Mammary epithelial cell (primary cell): ENCODE measurements at regions of chr17 and their contacts with region 1.

Region 1: GRCh38 chr17:32486111-32486700 is 587 bp upstream of the CDK5R1 start:
- DNase-seq: peak; percentile 73
- H3K4me3 ChIP-seq: peak overlapping the region in 2 of 3 experiments; percentile 60 to 72
- H3K27ac ChIP-seq: no peak overlapping the region
- H3K4me1 ChIP-seq: peaks cover 21% of the 10 kb centered on the region
- H3K27me3 ChIP-seq: no peaks in the 10 kb centered on the region
- CTCF ChIP-seq: no peak

Region 2: GRCh38 chr17:32569171-32570080 is 83.2 kb after region 1 on chr17:
- CTCF ChIA-PET with region 1: no interaction called
- dilution Hi-C with region 1: no loop called
- in situ Hi-C with region 1: no loop called
- intact Hi-C with region 1: loop called (anchors 1 kb)
- DNase-seq: peak; percentile 99
- H3K4me3 ChIP-seq: no peak overlapping the region
- H3K27ac ChIP-seq: peak overlapping the region; percentile 90
- H3K4me1 ChIP-seq: peaks cover 40% of the 10 kb centered on the region
- H3K27me3 ChIP-seq: no peaks in the 10 kb centered on the region
- CTCF ChIP-seq: no peak

Region 3: DNA sequence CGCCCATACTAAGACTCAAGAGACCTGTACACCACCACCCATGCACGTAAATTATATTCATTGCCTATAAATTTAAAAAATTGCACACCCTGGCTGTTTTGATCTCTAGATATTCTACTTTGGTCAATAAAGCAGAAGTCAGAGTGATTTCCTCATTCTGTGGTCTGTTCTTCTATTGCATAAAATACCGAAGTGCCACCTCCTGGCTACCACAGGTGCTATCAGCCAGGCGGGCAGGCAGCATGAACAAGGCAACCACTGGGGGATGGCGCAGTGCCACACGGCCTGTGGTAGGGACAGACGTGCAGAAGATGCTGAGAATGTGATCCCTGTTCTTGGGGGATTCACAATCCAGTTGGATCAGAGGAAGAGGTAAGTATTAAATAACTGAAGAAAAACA is 122.9 kb after region 1 on chr17:
- CTCF ChIA-PET with region 1: no interaction called
- dilution Hi-C with region 1: no loop called
- in situ Hi-C with region 1: loop called in 1 of 2 experiments (anchors 10 kb)
- intact Hi-C with region 1: loop called (anchors 1 kb)
- DNase-seq: peak; percentile 69
- H3K4me3 ChIP-seq: no peak overlapping the region
- H3K27ac ChIP-seq: no peak overlapping the region
- H3K4me1 ChIP-seq: peaks cover 3% of the 10 kb centered on the region
- H3K27me3 ChIP-seq: no peaks in the 10 kb centered on the region
- CTCF ChIP-seq: peak; percentile 62 to 73

Region 4: DNA sequence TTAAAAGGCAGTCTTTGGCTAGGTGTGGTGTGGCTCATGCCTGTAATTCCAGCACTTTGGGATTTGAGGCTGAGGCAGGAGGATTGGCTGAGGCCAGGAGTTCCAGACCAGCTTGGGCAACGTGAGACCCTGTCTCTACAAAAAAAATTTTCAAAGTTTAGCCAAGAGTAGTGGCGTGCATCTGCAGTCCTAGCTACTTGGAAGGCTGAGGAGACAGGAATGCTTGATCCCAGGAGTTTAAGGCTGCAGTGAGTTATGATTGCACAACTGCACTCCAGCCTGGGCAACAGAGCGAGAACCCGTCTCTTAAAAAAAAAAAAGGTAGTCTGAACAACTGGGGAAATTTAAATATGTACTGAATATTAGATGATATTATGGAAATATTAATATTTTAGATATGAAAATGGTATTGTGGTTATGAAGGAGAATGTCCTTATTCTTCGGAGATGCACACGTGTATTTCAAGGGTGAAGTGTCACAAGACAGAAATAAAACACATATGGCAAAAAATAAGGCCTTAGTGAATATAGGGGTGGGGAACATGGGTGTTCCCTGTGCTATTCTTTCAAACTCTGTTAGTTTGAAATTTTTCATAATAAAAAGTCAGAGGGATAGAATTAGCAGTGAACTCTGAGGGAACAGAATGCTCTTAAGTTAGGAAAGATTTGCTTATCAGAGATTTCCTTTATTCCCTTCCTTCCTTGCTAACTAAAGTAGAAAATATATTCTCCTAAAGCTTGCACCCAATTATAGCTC is 145.3 kb after region 1 on chr17:
- CTCF ChIA-PET with region 1: no interaction called
- dilution Hi-C with region 1: no loop called
- in situ Hi-C with region 1: no loop called
- intact Hi-C with region 1: no loop called
- DNase-seq: no peak
- H3K4me3 ChIP-seq: no peak overlapping the region
- H3K27ac ChIP-seq: no peak overlapping the region
- H3K4me1 ChIP-seq: peaks cover 2% of the 10 kb centered on the region
- H3K27me3 ChIP-seq: no peaks in the 10 kb centered on the region
- CTCF ChIP-seq: no peak

Region 5: GRCh38 chr17:32659419-32659842 is 173.2 kb after region 1 on chr17:
- CTCF ChIA-PET with region 1: no interaction called
- dilution Hi-C with region 1: no loop called
- in situ Hi-C with region 1: no loop called
- intact Hi-C with region 1: loop called (anchors 5 kb)
- DNase-seq: peak; percentile 40
- H3K4me3 ChIP-seq: no peak overlapping the region
- H3K27ac ChIP-seq: no peak overlapping the region
- H3K4me1 ChIP-seq: no peaks in the 10 kb centered on the region
- H3K27me3 ChIP-seq: no peaks in the 10 kb centered on the region
- CTCF ChIP-seq: peak; percentile 90 to 99